CD8-positive, alpha-beta T cell (primary cell): ENCODE measurements at regions of chr22 and their contacts with region 1.

Region 1: DNA sequence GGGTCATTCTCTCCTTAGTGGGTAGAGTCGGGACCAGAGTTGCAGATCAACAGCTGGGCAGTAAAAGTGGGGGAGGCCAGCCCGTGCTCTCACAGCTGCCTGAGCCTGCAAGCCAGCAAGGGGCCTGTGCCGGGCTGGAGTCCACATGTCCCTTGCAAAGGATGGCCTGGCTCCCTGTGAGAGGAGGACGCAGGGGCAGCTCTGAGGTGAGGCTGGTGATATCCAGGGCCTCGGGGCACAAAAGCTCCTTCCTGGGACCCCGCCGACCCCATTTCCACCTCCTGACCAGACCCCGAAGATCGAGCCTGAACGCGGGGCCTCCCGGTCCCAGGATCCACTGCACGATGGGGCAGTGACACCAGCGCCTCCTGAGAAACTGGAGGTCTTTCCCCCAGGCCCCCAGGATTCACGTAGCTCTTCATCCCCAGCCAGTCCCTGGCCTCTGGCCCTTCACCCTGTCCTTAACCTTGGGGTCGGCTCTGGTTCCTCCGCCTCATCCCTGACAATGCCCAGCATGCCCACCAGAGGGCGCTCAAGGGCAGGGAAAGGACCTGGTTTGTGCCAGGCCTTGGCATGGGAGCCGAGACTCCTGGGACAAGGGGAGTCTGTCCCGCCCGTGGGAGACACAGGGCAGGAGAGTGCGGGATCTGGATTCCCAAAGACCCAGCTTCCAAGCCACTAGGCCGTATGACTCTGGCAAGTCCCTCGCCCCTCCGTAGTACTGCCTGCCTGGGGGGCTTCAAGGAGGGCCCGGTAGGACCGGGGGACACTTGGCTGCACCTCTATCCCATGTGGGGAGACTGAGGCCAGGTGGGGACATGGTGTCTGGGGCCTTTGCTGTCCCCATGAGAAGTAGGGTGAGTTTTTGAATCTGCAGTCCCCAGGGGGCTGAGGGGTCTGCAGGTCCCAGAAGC is 17.8 kb upstream of the WNT7B start:
- DNase-seq: peak; percentile 63 to 92 (median 75)
- ATAC-seq: peak; percentile 85
- H3K4me3 ChIP-seq: no peak overlapping the region
- H3K4me3 Mint-ChIP-seq: no peak overlapping the region
- H3K27ac ChIP-seq: peak overlapping the region in 1 of 2 experiments; percentile 59
- H3K27ac Mint-ChIP-seq: no peak overlapping the region
- H3K4me1 ChIP-seq: peaks cover 7% of the 10 kb centered on the region
- H3K4me1 Mint-ChIP-seq: peaks cover 7% of the 10 kb centered on the region
- H3K27me3 ChIP-seq: no peaks in the 10 kb centered on the region
- H3K27me3 Mint-ChIP-seq: no peaks in the 10 kb centered on the region
- CTCF ChIP-seq: peak; percentile 94

Region 2: GRCh38 chr22:45984316-45984916 is 10.3 kb before region 1 on chr22:
- CTCF ChIA-PET with region 1: interaction called, 13 read pairs
- POLR2A ChIA-PET with region 1: no interaction called
- intact Hi-C with region 1: no loop called
- DNase-seq: peak in 1 of 9 experiments; percentile 30
- ATAC-seq: peak; percentile 61
- H3K4me3 ChIP-seq: no peak overlapping the region
- H3K4me3 Mint-ChIP-seq: no peak overlapping the region
- H3K27ac ChIP-seq: no peak overlapping the region
- H3K27ac Mint-ChIP-seq: no peak overlapping the region
- H3K4me1 ChIP-seq: no peaks in the 10 kb centered on the region
- H3K4me1 Mint-ChIP-seq: no peaks in the 10 kb centered on the region
- H3K27me3 ChIP-seq: peaks cover 0 to 7% of the 10 kb centered on the region in 2 experiments
- H3K27me3 Mint-ChIP-seq: peaks cover 5% of the 10 kb centered on the region
- CTCF ChIP-seq: no peak

Region 3: GRCh38 chr22:46116491-46116958 is 121.8 kb after region 1 on chr22:
- CTCF ChIA-PET with region 1: interaction called, 83 read pairs
- POLR2A ChIA-PET with region 1: interaction called, 3 read pairs
- intact Hi-C with region 1: loop called in 1 of 2 experiments (anchors 1 kb)
- DNase-seq: peak; percentile 70 to 90 (median 88)
- ATAC-seq: peak; percentile 97
- H3K4me3 ChIP-seq: no peak overlapping the region
- H3K4me3 Mint-ChIP-seq: no peak overlapping the region
- H3K27ac ChIP-seq: no peak overlapping the region
- H3K27ac Mint-ChIP-seq: no peak overlapping the region
- H3K4me1 ChIP-seq: peaks cover 5% of the 10 kb centered on the region
- H3K4me1 Mint-ChIP-seq: no peaks in the 10 kb centered on the region
- H3K27me3 ChIP-seq: no peaks in the 10 kb centered on the region
- H3K27me3 Mint-ChIP-seq: no peaks in the 10 kb centered on the region
- CTCF ChIP-seq: peak; percentile 70

Region 4: DNA sequence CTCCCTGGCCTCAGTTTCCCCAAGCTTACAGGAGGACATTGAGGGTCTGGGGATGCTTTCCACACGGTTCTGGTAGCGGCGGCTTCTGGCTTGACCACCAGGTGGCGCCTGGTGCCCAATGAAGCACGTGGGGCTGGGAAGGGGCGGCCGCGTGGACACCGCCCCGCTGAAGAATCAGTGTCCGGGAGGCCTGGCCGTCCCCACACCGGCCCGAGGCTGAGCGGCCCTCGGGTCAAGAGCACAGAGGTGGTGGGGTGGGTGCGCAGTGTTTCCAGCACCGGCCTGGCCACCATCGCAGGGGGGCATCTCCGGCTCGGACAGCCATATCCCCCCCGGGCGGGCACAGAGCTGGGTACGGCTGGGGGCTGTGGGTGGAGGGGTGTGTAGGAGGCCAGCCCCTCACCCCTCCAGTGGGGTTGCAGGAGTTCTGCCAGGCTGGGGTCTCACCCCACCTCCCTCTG is 127.8 kb after region 1 on chr22:
- CTCF ChIA-PET with region 1: interaction called, 83 read pairs
- POLR2A ChIA-PET with region 1: no interaction called
- intact Hi-C with region 1: no loop called
- DNase-seq: peak; percentile 39 to 77 (median 66)
- ATAC-seq: peak; percentile 79
- H3K4me3 ChIP-seq: no peak overlapping the region
- H3K4me3 Mint-ChIP-seq: no peak overlapping the region
- H3K27ac ChIP-seq: no peak overlapping the region
- H3K27ac Mint-ChIP-seq: no peak overlapping the region
- H3K4me1 ChIP-seq: no peaks in the 10 kb centered on the region
- H3K4me1 Mint-ChIP-seq: no peaks in the 10 kb centered on the region
- H3K27me3 ChIP-seq: no peaks in the 10 kb centered on the region
- H3K27me3 Mint-ChIP-seq: no peaks in the 10 kb centered on the region
- CTCF ChIP-seq: peak; percentile 91

Region 5: GRCh38 chr22:46320166-46320710 is 325.5 kb after region 1 on chr22:
- CTCF ChIA-PET with region 1: interaction called, 8 read pairs
- POLR2A ChIA-PET with region 1: no interaction called
- intact Hi-C with region 1: loop called in 1 of 2 experiments (anchors 5 kb)
- DNase-seq: no peak
- ATAC-seq: no peak
- H3K4me3 ChIP-seq: no peak overlapping the region
- H3K4me3 Mint-ChIP-seq: no peak overlapping the region
- H3K27ac ChIP-seq: no peak overlapping the region
- H3K27ac Mint-ChIP-seq: no peak overlapping the region
- H3K4me1 ChIP-seq: no peaks in the 10 kb centered on the region
- H3K4me1 Mint-ChIP-seq: no peaks in the 10 kb centered on the region
- H3K27me3 ChIP-seq: no peaks in the 10 kb centered on the region
- H3K27me3 Mint-ChIP-seq: no peaks in the 10 kb centered on the region
- CTCF ChIP-seq: no peak

Region 6: GRCh38 chr22:46542011-46542985 is 547.5 kb after region 1 on chr22:
- CTCF ChIA-PET with region 1: no interaction called
- POLR2A ChIA-PET with region 1: no interaction called
- intact Hi-C with region 1: loop called in 1 of 2 experiments (anchors 10 kb)
- DNase-seq: peak; percentile 51 to 84 (median 72)
- ATAC-seq: peak; percentile 100
- H3K4me3 ChIP-seq: no peak overlapping the region
- H3K4me3 Mint-ChIP-seq: no peak overlapping the region
- H3K27ac ChIP-seq: no peak overlapping the region
- H3K27ac Mint-ChIP-seq: no peak overlapping the region
- H3K4me1 ChIP-seq: no peaks in the 10 kb centered on the region
- H3K4me1 Mint-ChIP-seq: peaks cover 7% of the 10 kb centered on the region
- H3K27me3 ChIP-seq: peaks cover 5 to 11% of the 10 kb centered on the region in 2 experiments
- H3K27me3 Mint-ChIP-seq: peaks cover 44% of the 10 kb centered on the region
- CTCF ChIP-seq: peak; percentile 79